ENCODE measurements at regions of chr4 and their contacts with region 1.

Region 1: GRCh38 chr4:93187246-93188245 is 641.0 kb upstream of the ATOH1 start:
- DNase-seq: no peak
- H3K4me3 ChIP-seq: no peak overlapping the region
- H3K27ac ChIP-seq: no peak overlapping the region
- H3K4me1 ChIP-seq: no peaks in the 10 kb centered on the region; a peak in 2 of 4 replicates
- H3K27me3 ChIP-seq: no peaks in the 10 kb centered on the region
- CTCF ChIP-seq: no peak
- EP300 ChIP-seq: no peak
- RAD21 ChIP-seq: no peak

Region 2: GRCh38 chr4:93002240-93002639 is 185.3 kb before region 1 on chr4:
- CTCF ChIA-PET with region 1: no interaction called
- POLR2A ChIA-PET with region 1: no interaction called
- DNase-seq: no peak
- H3K4me3 ChIP-seq: no peak overlapping the region
- H3K27ac ChIP-seq: no peak overlapping the region
- H3K4me1 ChIP-seq: no peaks in the 10 kb centered on the region; a peak in 1 of 4 replicates
- H3K27me3 ChIP-seq: no peaks in the 10 kb centered on the region
- CTCF ChIP-seq: no peak
- EP300 ChIP-seq: no peak
- RAD21 ChIP-seq: no peak

Region 3: GRCh38 chr4:93199492-93199891 is 11.9 kb after region 1 on chr4:
- CTCF ChIA-PET with region 1: interaction called, 10 read pairs
- POLR2A ChIA-PET with region 1: no interaction called
- DNase-seq: peak; percentile 58
- H3K4me3 ChIP-seq: no peak overlapping the region; a peak in 1 of 4 replicates
- H3K27ac ChIP-seq: no peak overlapping the region
- H3K4me1 ChIP-seq: no peaks in the 10 kb centered on the region
- H3K27me3 ChIP-seq: no peaks in the 10 kb centered on the region
- CTCF ChIP-seq: peak; percentile 60
- EP300 ChIP-seq: no peak
- RAD21 ChIP-seq: peak; percentile 81

Measured in SK-N-SH (cell line).